ENCODE measurements at regions of chr17 and their contacts with region 1.

Region 1: DNA sequence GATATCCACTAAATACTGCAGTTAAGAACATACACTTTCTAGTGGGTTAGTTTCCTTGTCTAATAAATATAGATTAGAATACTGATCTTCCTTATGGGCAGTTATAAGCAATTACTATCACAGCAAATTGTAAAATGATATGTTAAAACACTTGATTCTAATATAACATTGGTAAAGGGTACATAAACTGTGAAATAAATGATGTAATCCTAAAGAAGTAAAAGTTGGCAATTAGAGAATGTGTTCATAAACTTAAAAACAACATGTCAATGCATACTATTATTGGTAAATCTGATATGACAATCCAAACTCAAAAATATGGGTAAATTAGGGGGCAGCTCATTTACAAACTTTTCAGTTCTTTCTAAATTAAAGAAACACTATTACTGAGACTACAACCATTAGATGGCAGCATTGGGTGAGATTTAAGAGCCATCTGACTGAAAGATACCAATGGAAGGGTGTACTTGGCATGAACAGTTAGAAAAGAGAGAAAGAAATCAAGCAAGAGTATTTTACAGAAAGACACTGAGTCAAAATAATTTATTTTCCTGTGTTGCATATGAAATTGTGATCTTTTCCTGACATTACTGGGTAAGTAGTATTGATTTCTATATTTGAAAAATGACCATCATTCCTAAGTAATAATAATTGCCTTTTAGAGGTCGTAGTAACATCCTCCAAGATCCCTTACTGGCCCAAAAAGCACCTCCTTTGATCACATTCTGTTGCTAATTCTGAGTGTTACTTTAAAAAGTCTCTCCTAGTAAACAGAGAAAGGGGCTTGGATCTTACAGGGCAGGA is 119.6 kb downstream of the SPAG9 start:
- DNase-seq: peak in 2 of 7 donors; percentile 31 to 48
- H3K4me3 ChIP-seq: no peak overlapping the region
- H3K27ac ChIP-seq: peak overlapping the region in 1 of 5 donors; percentile 24
- H3K4me1 ChIP-seq: no peaks in the 10 kb centered on the region
- H3K27me3 ChIP-seq: no peaks in the 10 kb centered on the region
- CTCF ChIP-seq: peak; percentile 44 to 79 (median 66)
- POLR2A ChIP-seq: no peak

Region 2: GRCh38 chr17:50297407-50297865 is 703.6 kb before region 1 on chr17:
- intact Hi-C with region 1: no loop called
- DNase-seq: peak; percentile 71 to 86 (median 83)
- H3K4me3 ChIP-seq: no peak overlapping the region
- H3K27ac ChIP-seq: no peak overlapping the region
- H3K4me1 ChIP-seq: no peaks in the 10 kb centered on the region
- H3K27me3 ChIP-seq: no peaks in the 10 kb centered on the region
- CTCF ChIP-seq: peak; percentile 74 to 98 (median 94)
- POLR2A ChIP-seq: no peak

Region 3: GRCh38 chr17:50956750-50957523 is 44.1 kb before region 1 on chr17:
- intact Hi-C with region 1: no loop called
- DNase-seq: peak; percentile 67 to 88 (median 79)
- H3K4me3 ChIP-seq: no peak overlapping the region
- H3K27ac ChIP-seq: peak overlapping the region; percentile 75 to 99 (median 95)
- H3K4me1 ChIP-seq: peaks cover 35 to 41% of the 10 kb centered on the region in 2 donors
- H3K27me3 ChIP-seq: no peaks in the 10 kb centered on the region
- CTCF ChIP-seq: peak; percentile 40 to 78 (median 66)
- POLR2A ChIP-seq: no peak

Region 4: DNA sequence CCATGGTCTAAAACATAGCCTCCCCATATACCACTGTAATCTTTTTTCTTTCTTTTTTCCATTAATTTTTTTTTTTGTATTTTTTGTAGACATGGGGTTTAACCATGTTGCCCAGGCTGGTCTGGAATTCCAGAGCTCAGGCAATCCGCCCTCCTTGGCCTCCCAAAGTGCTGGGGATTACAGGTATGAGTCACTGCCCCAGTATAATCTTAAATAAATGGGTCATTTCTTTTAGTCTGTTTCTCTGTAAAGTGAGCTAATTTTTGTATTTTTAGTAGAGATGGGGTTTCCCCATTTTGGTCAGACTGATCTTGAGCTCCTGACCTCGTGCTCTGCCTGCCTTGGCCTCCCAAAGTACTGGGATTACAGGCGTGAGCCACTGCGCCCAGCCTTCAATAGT is 146.6 kb after region 1 on chr17:
- intact Hi-C with region 1: loop called (anchors 5 to 10 kb)
- DNase-seq: peak in 2 of 7 donors; percentile 16 to 22
- H3K4me3 ChIP-seq: no peak overlapping the region
- H3K27ac ChIP-seq: peak overlapping the region in 2 of 5 donors; percentile 17 to 49
- H3K4me1 ChIP-seq: peaks cover 0 to 4% of the 10 kb centered on the region in 2 donors
- H3K27me3 ChIP-seq: no peaks in the 10 kb centered on the region
- CTCF ChIP-seq: no peak
- POLR2A ChIP-seq: no peak

Region 5: GRCh38 chr17:51153210-51154072 is 152.4 kb after region 1 on chr17 and contains the start of gene NME1:
- intact Hi-C with region 1: loop called (anchors 5 to 10 kb)
- DNase-seq: peak; percentile 95 to 99 (median 98)
- H3K4me3 ChIP-seq: peak within 1 kb of the TSS; percentile 20 to 87 (median 50)
- H3K27ac ChIP-seq: peak within 1 kb of the TSS; percentile 51 to 93 (median 90)
- H3K4me1 ChIP-seq: peaks cover 7 to 19% of the 10 kb centered on the region in 2 donors
- H3K27me3 ChIP-seq: no peaks in the 10 kb centered on the region
- CTCF ChIP-seq: peak; percentile 24 to 86 (median 74)
- POLR2A ChIP-seq: peak in 1 of 2 donors; percentile 69
- total RNA-seq, gene NME1: 17.0 to 146 (median 59.9) TPM

Measured in adrenal gland (tissue), 19 donors.